Heart left ventricle (tissue), 16 donors: ENCODE measurements at regions of chr18 and their contacts with region 1.

Region 1: GRCh38 chr18:73043226-73044020 is 175.6 kb upstream of the NETO1 start:
- DNase-seq: no peak
- ATAC-seq: no peak
- H3K4me3 ChIP-seq: no peak overlapping the region
- H3K27ac ChIP-seq: no peak overlapping the region
- H3K4me1 ChIP-seq: peaks cover 0 to 4% (median 0%) of the 10 kb centered on the region in 12 donors
- H3K27me3 ChIP-seq: no peaks in the 10 kb centered on the region
- CTCF ChIP-seq: no peak
- POLR2A ChIP-seq: no peak

Region 2: GRCh38 chr18:72325307-72325706 is 718.1 kb before region 1 on chr18:
- intact Hi-C with region 1: no loop called
- DNase-seq: no peak
- ATAC-seq: no peak
- H3K4me3 ChIP-seq: no peak overlapping the region
- H3K27ac ChIP-seq: no peak overlapping the region
- H3K4me1 ChIP-seq: no peaks in the 10 kb centered on the region
- H3K27me3 ChIP-seq: no peaks in the 10 kb centered on the region
- CTCF ChIP-seq: no peak
- POLR2A ChIP-seq: no peak

Region 3: DNA sequence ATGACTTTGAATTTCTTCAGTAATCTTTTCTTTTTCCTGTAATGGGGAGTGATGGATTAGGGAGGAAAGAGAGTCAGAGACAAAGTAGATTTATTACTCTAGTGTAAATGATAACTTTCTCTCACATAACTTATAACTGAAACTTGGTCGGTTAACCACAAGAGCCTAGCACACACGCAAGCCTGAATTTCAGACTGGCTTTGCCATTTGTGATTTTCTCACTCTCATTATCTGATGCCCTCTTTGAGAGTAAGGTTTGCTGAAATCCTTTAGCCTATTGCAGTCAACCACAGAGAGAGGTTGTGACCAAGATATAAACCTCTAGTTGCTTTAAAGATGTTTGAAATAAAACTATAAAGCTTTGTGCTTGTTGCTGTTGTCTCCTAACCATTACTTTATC is 57.7 kb before region 1 on chr18:
- intact Hi-C with region 1: loop called in 1 of 10 experiments (anchors 10 kb)
- DNase-seq: no peak
- ATAC-seq: no peak
- H3K4me3 ChIP-seq: no peak overlapping the region
- H3K27ac ChIP-seq: no peak overlapping the region
- H3K4me1 ChIP-seq: no peaks in the 10 kb centered on the region
- H3K27me3 ChIP-seq: no peaks in the 10 kb centered on the region
- CTCF ChIP-seq: no peak
- POLR2A ChIP-seq: no peak

Region 4: DNA sequence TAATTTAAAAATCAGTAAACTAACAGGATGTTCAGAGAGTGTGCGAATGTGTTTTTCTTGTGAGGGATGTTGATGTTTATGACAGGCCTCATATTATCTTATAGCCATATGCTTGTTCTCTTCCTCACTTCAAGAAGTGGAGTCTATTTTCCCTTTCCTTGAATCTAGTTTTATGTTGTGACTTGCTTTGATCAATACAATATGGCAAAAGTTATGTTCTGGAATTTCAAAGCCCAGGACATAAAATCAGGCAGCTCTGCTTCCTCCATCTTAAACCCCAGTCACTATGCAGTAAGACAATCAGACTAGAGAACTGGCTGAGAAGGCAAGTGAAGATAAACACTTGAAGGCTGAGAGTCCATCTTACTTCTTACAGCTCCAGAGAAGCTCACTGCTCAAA is 409.4 kb after region 1 on chr18:
- intact Hi-C with region 1: no loop called
- DNase-seq: no peak
- ATAC-seq: no peak
- H3K4me3 ChIP-seq: no peak overlapping the region
- H3K27ac ChIP-seq: no peak overlapping the region
- H3K4me1 ChIP-seq: no peaks in the 10 kb centered on the region
- H3K27me3 ChIP-seq: no peaks in the 10 kb centered on the region
- CTCF ChIP-seq: no peak
- POLR2A ChIP-seq: no peak